Posterior vena cava (tissue), 2 donors: ENCODE measurements at regions of chr7 and their contacts with region 1.

Region 1: GRCh38 chr7:30112103-30112713 is 22.6 kb upstream of the MTURN start:
- DNase-seq: no peak

Region 2: GRCh38 chr7:30080818-30081217 is 31.4 kb before region 1 on chr7:
- intact Hi-C with region 1: loop called in 1 of 2 experiments (anchors 2 kb)
- DNase-seq: no peak

Region 3: GRCh38 chr7:32059289-32060011 is 1947.2 kb after region 1 on chr7:
- intact Hi-C with region 1: no loop called
- DNase-seq: no peak